ENCODE measurements at regions of chr12 and their contacts with region 1.

Region 1: GRCh38 chr12:75480469-75480949 is at the start of gene GLIPR1:
- DNase-seq: peak; percentile 78 to 92 (median 91)
- H3K4me3 ChIP-seq: peak within 1 kb of the TSS; percentile 16 to 91 (median 68)
- H3K27ac ChIP-seq: peak within 1 kb of the TSS; percentile 80 to 87
- H3K4me1 ChIP-seq: peaks cover 54 to 90% (median 73%) of the 10 kb centered on the region in 4 experiments
- H3K27me3 ChIP-seq: no peaks in the 10 kb centered on the region

Region 2: DNA sequence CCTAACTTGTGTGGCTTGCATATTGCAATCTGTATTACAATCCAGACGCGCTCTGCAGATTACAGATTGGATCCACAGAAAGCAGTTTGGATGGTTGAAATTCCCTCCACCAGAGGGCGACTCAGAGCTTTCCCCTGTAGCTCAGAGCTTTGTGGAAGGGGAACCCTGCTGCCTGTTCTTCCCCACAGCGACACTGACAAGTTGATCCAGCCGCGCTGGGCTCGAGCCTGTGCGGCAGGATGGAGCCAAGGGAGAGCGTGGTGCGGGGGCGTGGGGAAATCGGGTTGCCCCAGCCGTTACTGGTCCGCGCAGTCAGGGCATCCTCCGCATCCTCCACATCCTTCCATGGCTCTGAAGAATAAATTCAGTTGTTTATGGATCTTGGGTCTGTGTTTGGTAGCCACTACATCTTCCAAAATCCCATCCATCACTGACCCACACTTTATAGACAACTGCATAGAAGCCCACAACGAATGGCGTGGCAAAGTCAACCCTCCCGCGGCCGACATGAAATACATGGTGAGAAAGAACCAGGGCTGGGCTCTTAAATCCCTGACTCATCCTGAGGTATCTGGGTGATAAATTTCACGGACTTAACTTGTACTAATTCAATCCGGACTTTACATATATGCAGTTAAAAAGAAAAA is 146.0 kb before region 1 on chr12 and contains the start of gene GLIPR1L1:
- CTCF ChIA-PET with region 1: interaction called, 51 read pairs
- POLR2A ChIA-PET with region 1: no interaction called
- DNase-seq: peak; percentile 92 to 97 (median 96)
- H3K4me3 ChIP-seq: peak within 1 kb of the TSS; percentile 15 to 87 (median 65)
- H3K27ac ChIP-seq: no peak within 1 kb of the TSS
- H3K4me1 ChIP-seq: peaks cover 3 to 20% (median 11%) of the 10 kb centered on the region in 4 experiments
- H3K27me3 ChIP-seq: peaks cover 0 to 3% (median 0%) of the 10 kb centered on the region in 5 experiments

Region 3: GRCh38 chr12:75390899-75391538 is 89.5 kb before region 1 on chr12 and contains the start of gene GLIPR1L2:
- CTCF ChIA-PET with region 1: interaction called, 36 read pairs
- POLR2A ChIA-PET with region 1: interaction called, 4 read pairs
- DNase-seq: peak; percentile 98
- H3K4me3 ChIP-seq: peak within 1 kb of the TSS in 6 of 7 experiments; percentile 67 to 92 (median 74)
- H3K27ac ChIP-seq: peak within 1 kb of the TSS; percentile 66 to 82
- H3K4me1 ChIP-seq: peaks cover 7 to 52% (median 19%) of the 10 kb centered on the region in 4 experiments
- H3K27me3 ChIP-seq: no peaks in the 10 kb centered on the region

Region 4: GRCh38 chr12:75437564-75437963 is 42.9 kb before region 1 on chr12:
- CTCF ChIA-PET with region 1: interaction called, 17 read pairs
- POLR2A ChIA-PET with region 1: no interaction called
- DNase-seq: peak; percentile 36 to 71 (median 70)
- H3K4me3 ChIP-seq: no peak overlapping the region
- H3K27ac ChIP-seq: no peak overlapping the region
- H3K4me1 ChIP-seq: peaks cover 0 to 8% (median 7%) of the 10 kb centered on the region in 4 experiments
- H3K27me3 ChIP-seq: no peaks in the 10 kb centered on the region

Region 5: DNA sequence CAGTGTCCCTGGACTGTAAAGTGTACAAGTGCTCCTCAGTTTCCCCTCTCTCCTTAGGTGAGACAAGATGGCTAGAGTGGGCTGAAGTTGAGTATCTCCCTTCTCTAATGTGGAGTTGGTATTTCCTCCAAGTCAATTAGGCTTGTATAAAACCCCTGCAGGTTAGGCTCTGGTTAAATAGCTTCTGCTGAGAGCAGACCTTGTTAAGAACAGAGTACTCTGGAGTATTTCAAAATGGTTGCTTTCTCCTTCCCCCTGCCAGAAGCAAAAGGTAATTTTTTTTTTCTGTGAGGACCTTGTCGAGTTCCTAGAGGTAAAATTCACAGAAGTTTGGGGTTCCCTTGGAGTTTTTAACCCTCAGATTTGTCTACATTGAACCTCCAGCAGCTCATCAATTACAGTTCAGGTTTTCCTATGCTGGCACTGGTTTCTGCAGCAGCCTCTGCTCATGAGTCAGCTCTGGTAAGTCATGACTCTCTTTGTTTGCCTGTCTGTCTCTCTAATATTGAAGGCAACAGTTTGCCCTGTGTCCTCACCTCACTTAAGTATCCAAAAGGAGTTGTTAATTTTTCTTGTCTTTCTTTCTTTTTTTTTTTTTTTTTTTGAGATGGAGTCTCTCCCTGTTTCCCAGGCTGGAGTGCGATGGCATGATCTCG is 27.7 kb before region 1 on chr12:
- CTCF ChIA-PET with region 1: interaction called, 13 read pairs
- POLR2A ChIA-PET with region 1: no interaction called
- DNase-seq: peak in 1 of 3 donors; percentile 49
- H3K4me3 ChIP-seq: no peak overlapping the region
- H3K27ac ChIP-seq: no peak overlapping the region
- H3K4me1 ChIP-seq: peaks cover 6 to 35% (median 25%) of the 10 kb centered on the region in 4 experiments
- H3K27me3 ChIP-seq: no peaks in the 10 kb centered on the region

Region 6: DNA sequence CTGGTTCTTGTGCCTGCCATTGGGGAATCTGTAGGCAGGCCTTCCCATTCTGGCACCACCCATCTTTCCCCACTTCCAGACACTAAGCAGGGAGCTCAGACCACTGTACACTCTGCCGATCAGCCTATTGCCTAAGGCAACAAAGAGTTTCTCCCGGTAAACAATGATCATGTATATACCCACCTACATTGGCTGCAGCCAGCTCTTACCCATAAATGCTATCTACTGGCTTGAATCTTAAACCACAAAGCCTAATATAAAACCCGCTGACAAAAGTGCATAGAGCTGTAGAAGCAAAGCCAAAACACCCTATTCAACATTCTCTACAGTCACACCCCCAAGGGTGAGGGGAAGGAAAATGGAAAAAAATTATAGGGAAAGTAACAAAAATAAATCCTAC is 20.8 kb before region 1 on chr12:
- CTCF ChIA-PET with region 1: interaction called, 13 read pairs
- POLR2A ChIA-PET with region 1: interaction called, 3 read pairs
- DNase-seq: no peak
- H3K4me3 ChIP-seq: no peak overlapping the region
- H3K27ac ChIP-seq: no peak overlapping the region
- H3K4me1 ChIP-seq: peaks cover 6 to 40% (median 27%) of the 10 kb centered on the region in 4 experiments
- H3K27me3 ChIP-seq: no peaks in the 10 kb centered on the region

Region 7: GRCh38 chr12:75505706-75506312 is 25.3 kb after region 1 on chr12:
- CTCF ChIA-PET with region 1: interaction called, 70 read pairs
- POLR2A ChIA-PET with region 1: no interaction called
- DNase-seq: peak; percentile 54 to 77 (median 73)
- H3K4me3 ChIP-seq: no peak overlapping the region
- H3K27ac ChIP-seq: no peak overlapping the region
- H3K4me1 ChIP-seq: peaks cover 10 to 18% (median 11%) of the 10 kb centered on the region in 4 experiments
- H3K27me3 ChIP-seq: no peaks in the 10 kb centered on the region

Region 8: DNA sequence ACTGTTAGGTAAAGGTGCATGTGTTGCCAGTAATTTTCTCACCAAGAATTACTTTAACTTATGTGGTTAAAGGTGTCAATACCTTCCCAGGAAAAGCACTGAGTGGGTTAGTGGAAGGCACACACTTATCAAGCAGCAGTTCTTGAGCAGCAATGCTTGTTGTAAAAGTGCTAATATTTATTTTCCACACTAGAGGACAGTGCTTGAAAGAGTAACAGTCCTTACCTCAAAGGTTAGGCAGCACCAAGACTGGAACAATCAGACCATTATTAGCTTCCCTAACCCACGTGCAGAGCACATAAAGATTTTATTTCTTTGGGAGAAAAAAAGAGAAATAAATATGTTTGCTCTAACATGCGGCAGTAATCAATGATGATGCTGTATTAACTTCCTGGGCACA is 79.7 kb after region 1 on chr12:
- CTCF ChIA-PET with region 1: no interaction called
- POLR2A ChIA-PET with region 1: no interaction called
- DNase-seq: peak in 1 of 3 donors; percentile 3
- H3K4me3 ChIP-seq: no peak overlapping the region
- H3K27ac ChIP-seq: no peak overlapping the region
- H3K4me1 ChIP-seq: peaks cover 0 to 3% (median 1%) of the 10 kb centered on the region in 4 experiments
- H3K27me3 ChIP-seq: no peaks in the 10 kb centered on the region

Measured in common myeloid progenitor, CD34-positive (primary cell).